ENCODE measurements at regions of chr15 and their contacts with region 1.

Region 1: GRCh38 chr15:61764981-61765380 is 295.3 kb downstream of the VPS13C start:
- DNase-seq: no peak
- ATAC-seq: no peak
- H3K4me3 ChIP-seq: no peak overlapping the region
- H3K4me3 Mint-ChIP-seq: no peak overlapping the region
- H3K27ac ChIP-seq: no peak overlapping the region
- H3K27ac Mint-ChIP-seq: no peak overlapping the region
- H3K4me1 ChIP-seq: no peaks in the 10 kb centered on the region
- H3K4me1 Mint-ChIP-seq: no peaks in the 10 kb centered on the region
- H3K27me3 ChIP-seq: peaks cover 0 to 5% of the 10 kb centered on the region in 2 experiments
- H3K27me3 Mint-ChIP-seq: peaks cover 29 to 70% of the 10 kb centered on the region in 2 donors

Region 2: DNA sequence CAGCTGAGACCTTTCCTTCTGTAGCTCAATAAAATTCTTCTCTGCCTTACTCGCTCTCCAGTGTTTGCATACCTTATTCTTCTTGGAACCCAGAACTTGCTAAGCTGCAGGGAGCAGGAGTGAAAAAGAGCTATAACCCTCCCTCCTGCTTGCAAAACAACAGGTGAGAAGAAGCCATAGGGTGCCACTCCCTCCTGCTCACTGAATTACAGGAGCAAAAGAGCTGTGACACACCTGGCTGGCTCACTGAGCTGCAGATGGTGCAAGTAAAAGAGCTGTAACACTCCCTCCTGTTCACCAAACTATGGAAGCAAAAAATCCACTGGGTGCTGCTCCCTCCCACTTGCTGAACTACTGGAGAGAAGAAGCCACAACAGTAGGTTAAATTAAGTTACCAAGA is 444.3 kb after region 1 on chr15:
- CTCF ChIA-PET with region 1: no interaction called
- POLR2A ChIA-PET with region 1: interaction called in 1 of 2 experiments, 10 read pairs
- DNase-seq: no peak
- ATAC-seq: no peak
- H3K4me3 ChIP-seq: no peak overlapping the region
- H3K4me3 Mint-ChIP-seq: no peak overlapping the region
- H3K27ac ChIP-seq: no peak overlapping the region
- H3K27ac Mint-ChIP-seq: no peak overlapping the region
- H3K4me1 ChIP-seq: no peaks in the 10 kb centered on the region
- H3K4me1 Mint-ChIP-seq: peaks cover 10 to 12% (median 11%) of the 10 kb centered on the region in 3 donors
- H3K27me3 ChIP-seq: peaks cover 0 to 6% of the 10 kb centered on the region in 2 experiments
- H3K27me3 Mint-ChIP-seq: peaks cover 7 to 10% of the 10 kb centered on the region in 2 donors